ENCODE measurements at regions of chr2 and their contacts with region 1.

Region 1: GRCh38 chr2:227033471-227034148 is 130.4 kb downstream of the COL4A4 start:
- DNase-seq: peak; percentile 60 to 73 (median 72)
- ATAC-seq: peak; percentile 87
- H3K4me3 ChIP-seq: no peak overlapping the region
- H3K4me1 ChIP-seq: no peaks in the 10 kb centered on the region
- CTCF ChIP-seq: peak; percentile 41

Region 2: DNA sequence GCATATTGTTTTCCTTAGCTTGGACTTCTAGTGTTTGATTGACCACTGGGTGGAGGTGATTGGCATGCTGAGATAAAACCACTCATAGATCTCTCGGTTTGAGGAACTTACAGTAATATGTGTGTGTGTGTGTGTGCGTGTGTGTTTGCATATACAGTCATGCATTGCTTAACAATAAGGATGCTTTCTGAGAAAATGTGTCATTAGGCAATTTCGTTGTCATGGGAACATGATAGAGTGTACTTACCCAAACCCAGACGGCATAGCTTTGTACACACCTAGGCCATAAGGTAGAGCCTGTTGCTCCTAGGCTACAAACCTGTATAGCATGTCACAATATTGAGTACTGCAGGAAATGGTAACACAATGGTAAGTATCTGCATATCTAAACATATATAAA is 1466.8 kb before region 1 on chr2:
- intact Hi-C with region 1: no loop called
- DNase-seq: peak in 1 of 3 donors; percentile 47
- ATAC-seq: peak; percentile 87
- H3K4me3 ChIP-seq: no peak overlapping the region
- H3K4me1 ChIP-seq: no peaks in the 10 kb centered on the region
- CTCF ChIP-seq: no peak

Region 3: GRCh38 chr2:227079726-227080125 is 46.1 kb after region 1 on chr2:
- intact Hi-C with region 1: no loop called
- DNase-seq: no peak
- ATAC-seq: no peak
- H3K4me3 ChIP-seq: no peak overlapping the region
- H3K4me1 ChIP-seq: peaks cover 4% of the 10 kb centered on the region
- CTCF ChIP-seq: no peak

Region 4: GRCh38 chr2:227106845-227107759 is 73.5 kb after region 1 on chr2:
- intact Hi-C with region 1: loop called in 1 of 2 experiments (anchors 10 kb)
- DNase-seq: peak in 2 of 3 donors; percentile 38 to 72
- ATAC-seq: peak; percentile 74
- H3K4me3 ChIP-seq: no peak overlapping the region
- H3K4me1 ChIP-seq: no peaks in the 10 kb centered on the region
- CTCF ChIP-seq: peak; percentile 31

Measured in mucosa of descending colon (tissue), 3 donors.